PC-9 (cell line): ENCODE measurements at regions of chr1 and their contacts with region 1.

Region 1: DNA sequence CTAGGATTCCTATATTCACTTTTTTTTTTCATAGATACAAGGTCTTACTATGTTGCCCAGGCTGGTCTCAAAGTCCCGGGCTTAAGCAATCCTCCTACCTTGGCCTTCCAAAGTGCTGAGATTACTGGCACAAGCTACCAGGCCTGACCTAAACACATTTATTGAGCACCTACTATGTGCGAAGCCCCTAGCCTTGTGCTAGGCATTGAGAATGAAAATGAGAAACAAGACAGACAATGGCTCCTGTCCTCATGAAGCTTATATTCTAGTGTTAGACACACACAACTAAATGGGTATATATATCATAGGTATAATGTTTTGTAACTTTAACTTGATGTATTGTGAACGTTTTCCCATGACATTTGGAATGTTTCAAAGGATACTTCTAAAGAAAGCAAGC is 11.5 kb downstream of the TMEM50A start:
- DNase-seq: no peak
- H3K4me3 ChIP-seq: no peak overlapping the region
- H3K27ac ChIP-seq: no peak overlapping the region
- H3K4me1 ChIP-seq: no peaks in the 10 kb centered on the region
- H3K27me3 ChIP-seq: no peaks in the 10 kb centered on the region
- CTCF ChIP-seq: no peak

Region 2: GRCh38 chr1:25247024-25247828 is 102.4 kb before region 1 on chr1 and contains the start of gene RSRP1:
- CTCF ChIA-PET with region 1: no interaction called
- POLR2A ChIA-PET with region 1: interaction called, 4 read pairs
- intact Hi-C with region 1: loop called (anchors 5 kb)
- DNase-seq: peak; percentile 81 to 97
- H3K4me3 ChIP-seq: peak within 1 kb of the TSS; percentile 73
- H3K27ac ChIP-seq: peak within 1 kb of the TSS; percentile 85
- H3K4me1 ChIP-seq: peaks cover 13% of the 10 kb centered on the region; the same call in 1 of the 2 replicates
- H3K27me3 ChIP-seq: no peaks in the 10 kb centered on the region
- CTCF ChIP-seq: no peak
- total RNA-seq, gene RSRP1: 113 and 163 TPM in 2 replicates